Mammary epithelial cell (primary cell): ENCODE measurements at regions of chr19 and their contacts with region 1.

Region 1: GRCh38 chr19:33831825-33832224 is 35.2 kb downstream of the KCTD15 start:
- DNase-seq: no peak
- H3K4me3 ChIP-seq: no peak overlapping the region
- H3K27ac ChIP-seq: no peak overlapping the region
- H3K4me1 ChIP-seq: no peaks in the 10 kb centered on the region
- H3K27me3 ChIP-seq: no peaks in the 10 kb centered on the region
- CTCF ChIP-seq: no peak

Region 2: GRCh38 chr19:33740811-33741396 is 90.9 kb before region 1 on chr19:
- CTCF ChIA-PET with region 1: no interaction called
- dilution Hi-C with region 1: loop called (anchors 5 kb)
- in situ Hi-C with region 1: no loop called
- intact Hi-C with region 1: no loop called
- DNase-seq: peak; percentile 16
- H3K4me3 ChIP-seq: no peak overlapping the region
- H3K27ac ChIP-seq: no peak overlapping the region
- H3K4me1 ChIP-seq: no peaks in the 10 kb centered on the region
- H3K27me3 ChIP-seq: no peaks in the 10 kb centered on the region
- CTCF ChIP-seq: no peak

Region 3: GRCh38 chr19:33947265-33947964 is 115.6 kb after region 1 on chr19:
- CTCF ChIA-PET with region 1: no interaction called
- dilution Hi-C with region 1: loop called (anchors 5 kb)
- in situ Hi-C with region 1: no loop called
- intact Hi-C with region 1: no loop called
- DNase-seq: no peak
- H3K4me3 ChIP-seq: no peak overlapping the region
- H3K27ac ChIP-seq: no peak overlapping the region
- H3K4me1 ChIP-seq: no peaks in the 10 kb centered on the region
- H3K27me3 ChIP-seq: no peaks in the 10 kb centered on the region
- CTCF ChIP-seq: no peak